ENCODE measurements at regions of chr11 and their contacts with region 1.

Region 1: DNA sequence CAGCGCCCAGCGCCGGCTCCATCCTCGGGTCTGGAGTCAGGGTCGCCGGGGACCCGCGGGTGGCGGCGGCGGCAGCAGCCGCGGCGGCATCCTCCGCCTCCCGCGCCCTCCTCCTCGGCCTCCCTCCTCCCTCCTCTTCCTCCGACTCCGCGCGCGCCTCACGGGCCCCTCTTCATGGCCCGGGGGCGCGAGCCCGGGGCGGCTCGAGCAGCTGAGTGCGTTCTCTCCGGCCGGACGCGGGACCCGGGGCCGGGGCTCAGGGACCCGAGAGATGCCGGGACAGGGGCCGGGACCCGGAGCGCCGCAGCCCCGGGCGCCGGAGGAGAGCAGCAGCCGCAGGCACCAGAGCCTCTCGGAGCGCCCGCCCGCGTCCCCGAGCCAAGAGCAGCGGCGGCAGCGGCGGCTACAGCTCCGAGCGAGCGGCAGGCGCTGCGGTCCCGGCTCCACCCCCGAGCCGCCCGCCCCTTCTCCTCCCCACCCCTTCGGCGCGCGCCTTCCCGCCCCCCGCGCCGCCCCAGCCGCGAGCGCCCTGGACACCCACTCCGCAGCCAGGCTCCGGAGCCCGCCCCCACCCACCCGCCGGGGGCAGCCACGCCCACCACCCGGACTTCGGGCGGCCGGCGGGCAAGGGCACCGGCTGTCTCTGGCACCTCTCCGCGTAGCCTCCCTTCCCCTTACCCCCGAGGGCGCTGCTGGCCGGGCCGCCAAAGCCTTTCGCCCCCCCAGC is at the start of gene CHST1:
- DNase-seq: peak; percentile 55 to 75 (median 65)
- H3K4me3 ChIP-seq: peak within 1 kb of the TSS; percentile 54
- H3K27ac ChIP-seq: peak within 1 kb of the TSS; percentile 63 to 83
- H3K4me1 ChIP-seq: peaks cover 10% of the 10 kb centered on the region
- H3K27me3 ChIP-seq: no peaks in the 10 kb centered on the region
- CTCF ChIP-seq: no peak
- EP300 ChIP-seq: no peak
- POLR2A ChIP-seq: no peak
- total RNA-seq, gene CHST1: 3.8 to 12.9 (median 8.2) TPM

Region 2: GRCh38 chr11:45450189-45450588 is 215.2 kb before region 1 on chr11:
- intact Hi-C with region 1: no loop called
- DNase-seq: no peak
- H3K4me3 ChIP-seq: no peak overlapping the region
- H3K27ac ChIP-seq: no peak overlapping the region
- H3K4me1 ChIP-seq: no peaks in the 10 kb centered on the region
- H3K27me3 ChIP-seq: no peaks in the 10 kb centered on the region
- CTCF ChIP-seq: no peak
- EP300 ChIP-seq: no peak
- POLR2A ChIP-seq: no peak

Region 3: GRCh38 chr11:45580399-45580798 is 85.0 kb before region 1 on chr11:
- intact Hi-C with region 1: no loop called
- DNase-seq: no peak
- H3K4me3 ChIP-seq: no peak overlapping the region
- H3K27ac ChIP-seq: no peak overlapping the region
- H3K4me1 ChIP-seq: no peaks in the 10 kb centered on the region
- H3K27me3 ChIP-seq: no peaks in the 10 kb centered on the region
- CTCF ChIP-seq: no peak
- EP300 ChIP-seq: no peak
- POLR2A ChIP-seq: no peak

Region 4: DNA sequence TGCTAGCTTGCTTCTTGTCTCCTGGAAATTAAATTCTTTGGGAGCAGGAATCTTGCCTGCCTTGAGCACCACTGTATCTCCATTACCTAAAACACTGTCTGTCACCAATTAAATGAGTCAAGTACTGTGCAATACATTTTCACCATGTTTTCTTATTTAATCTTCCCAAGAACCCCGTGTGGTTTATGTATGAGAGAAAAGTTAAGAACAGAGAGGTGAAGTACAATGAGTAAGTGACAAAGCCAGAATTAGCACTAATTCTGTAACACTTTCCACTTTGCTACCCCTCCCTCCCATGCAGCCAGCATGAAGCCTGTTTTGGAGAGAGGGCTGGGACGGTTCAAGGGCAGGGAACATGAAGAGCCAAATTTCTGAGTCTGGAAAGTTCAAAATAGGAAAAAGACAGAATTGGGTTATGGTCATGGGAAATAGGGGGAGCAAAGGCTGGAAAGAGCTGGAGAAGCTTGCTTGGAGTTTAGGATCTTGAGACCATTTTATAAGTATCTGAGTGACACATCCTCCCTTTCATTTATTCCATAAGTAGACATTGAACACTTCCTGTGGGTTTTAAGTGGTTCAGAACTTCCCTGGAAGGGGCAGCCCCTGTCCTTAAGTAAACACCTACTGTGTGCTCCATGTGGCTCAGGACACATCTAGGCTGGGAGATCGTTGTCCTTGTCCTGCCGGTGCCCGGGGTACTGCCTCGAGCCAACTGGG is 60.6 kb after region 1 on chr11:
- intact Hi-C with region 1: loop called in 1 of 4 experiments (anchors 5 kb)
- DNase-seq: peak; percentile 44 to 61 (median 58)
- H3K4me3 ChIP-seq: no peak overlapping the region
- H3K27ac ChIP-seq: peak overlapping the region; percentile 66 to 67
- H3K4me1 ChIP-seq: peaks cover 15% of the 10 kb centered on the region
- H3K27me3 ChIP-seq: no peaks in the 10 kb centered on the region
- CTCF ChIP-seq: no peak
- EP300 ChIP-seq: no peak
- POLR2A ChIP-seq: no peak

Region 5: GRCh38 chr11:45754261-45754709 is 88.9 kb after region 1 on chr11:
- intact Hi-C with region 1: loop called in 1 of 4 experiments (anchors 10 kb)
- DNase-seq: peak in 3 of 5 donors; percentile 27 to 44 (median 29)
- H3K4me3 ChIP-seq: no peak overlapping the region
- H3K27ac ChIP-seq: peak overlapping the region in 1 of 2 donors; percentile 57
- H3K4me1 ChIP-seq: peaks cover 15% of the 10 kb centered on the region
- H3K27me3 ChIP-seq: no peaks in the 10 kb centered on the region
- CTCF ChIP-seq: no peak
- EP300 ChIP-seq: no peak
- POLR2A ChIP-seq: no peak

Region 6: DNA sequence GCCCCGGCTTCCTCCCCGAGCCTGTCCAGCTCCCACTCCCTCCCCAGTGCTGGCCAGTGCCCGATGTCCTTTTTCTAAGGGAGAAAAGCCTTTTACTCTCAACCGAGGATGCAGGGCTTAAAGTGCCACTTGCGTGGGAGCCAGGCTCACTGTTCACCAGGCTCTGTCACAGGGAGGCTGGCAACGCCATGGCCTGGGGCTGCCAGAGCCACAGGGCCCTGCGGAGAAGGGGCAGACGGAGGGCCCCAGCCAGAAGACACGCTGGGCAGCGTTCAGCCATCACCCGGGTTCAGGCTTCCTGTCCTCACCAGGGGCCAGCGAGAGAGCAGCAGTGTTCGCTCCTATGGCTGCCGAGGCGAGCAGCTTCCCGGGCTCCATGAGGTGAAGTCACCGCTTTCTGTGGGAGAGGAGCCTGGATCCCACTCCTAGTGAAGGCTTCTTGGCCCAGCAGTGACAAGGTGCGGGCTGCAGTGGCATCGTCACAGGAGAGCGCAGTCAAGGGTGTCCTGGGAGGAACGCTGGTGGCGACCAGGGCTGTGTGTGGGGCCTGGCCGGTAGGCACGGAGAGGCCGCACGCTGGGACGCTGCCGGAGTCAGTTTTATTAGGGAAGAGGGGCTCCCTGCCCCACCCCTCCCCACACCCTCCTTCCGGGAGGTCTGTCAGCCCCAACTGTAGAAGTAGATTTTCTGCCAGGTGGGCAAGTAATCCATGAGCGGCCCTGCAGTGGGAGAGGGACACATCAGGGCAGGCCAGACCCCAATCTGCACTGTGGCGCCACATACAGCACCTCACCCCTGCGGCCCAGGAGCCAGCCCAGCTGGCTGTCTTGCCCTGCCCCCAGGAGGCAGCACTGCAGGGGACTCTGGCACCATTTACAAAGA is 244.5 kb after region 1 on chr11:
- intact Hi-C with region 1: loop called in 1 of 4 experiments (anchors 5 kb)
- DNase-seq: no peak
- H3K4me3 ChIP-seq: no peak overlapping the region
- H3K27ac ChIP-seq: no peak overlapping the region
- H3K4me1 ChIP-seq: no peaks in the 10 kb centered on the region
- H3K27me3 ChIP-seq: no peaks in the 10 kb centered on the region
- CTCF ChIP-seq: no peak
- EP300 ChIP-seq: no peak
- POLR2A ChIP-seq: no peak

Measured in ovary (tissue), 10 donors.